Adrenal gland (tissue), 19 donors: ENCODE measurements at regions of chr12 and their contacts with region 1.

Region 1: DNA sequence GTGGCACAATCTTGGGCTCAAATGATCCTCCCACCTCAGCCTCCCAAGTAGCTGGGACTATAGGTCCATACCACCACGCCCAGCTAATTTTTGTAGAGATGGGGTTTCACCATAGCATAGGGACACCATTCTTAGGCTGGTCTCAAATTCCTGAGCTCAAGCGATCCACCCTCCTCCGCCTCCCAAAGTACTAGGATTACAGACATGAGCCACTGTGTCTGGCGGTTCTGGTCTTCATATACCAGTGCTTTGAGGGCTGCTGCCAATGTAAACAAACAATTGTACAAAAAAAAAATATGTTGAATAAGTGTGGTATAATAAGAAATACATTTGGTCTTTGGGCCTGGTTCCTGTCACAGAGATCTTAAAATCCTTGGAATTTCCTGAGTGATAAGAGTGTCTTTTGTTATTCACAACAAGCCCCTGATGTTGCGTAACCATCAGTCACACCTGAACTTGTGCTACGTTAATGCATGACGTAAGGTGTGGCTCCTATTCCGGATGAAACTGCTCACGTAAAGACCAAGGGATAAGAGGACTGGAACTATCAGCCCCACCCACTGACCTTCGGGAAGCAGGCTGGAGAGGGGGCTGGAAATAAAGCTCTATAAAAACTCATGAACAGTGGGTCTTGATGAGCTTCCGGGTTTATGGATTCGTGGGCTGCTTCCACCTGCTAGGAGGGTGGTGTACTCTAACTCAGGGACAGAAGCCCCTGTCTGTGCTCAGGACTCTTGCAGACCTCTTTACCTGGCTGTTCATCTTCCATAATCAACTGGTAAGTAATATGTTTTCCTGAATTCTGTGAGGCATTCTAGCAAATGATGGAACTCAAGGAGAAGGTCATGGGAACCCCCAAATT is 16.5 kb upstream of the RIMKLB start:
- DNase-seq: peak in 2 of 7 donors; percentile 13
- H3K4me3 ChIP-seq: no peak overlapping the region
- H3K27ac ChIP-seq: peak overlapping the region in 1 of 5 donors; percentile 57
- H3K4me1 ChIP-seq: no peaks in the 10 kb centered on the region
- H3K27me3 ChIP-seq: no peaks in the 10 kb centered on the region
- CTCF ChIP-seq: no peak
- POLR2A ChIP-seq: no peak

Region 2: DNA sequence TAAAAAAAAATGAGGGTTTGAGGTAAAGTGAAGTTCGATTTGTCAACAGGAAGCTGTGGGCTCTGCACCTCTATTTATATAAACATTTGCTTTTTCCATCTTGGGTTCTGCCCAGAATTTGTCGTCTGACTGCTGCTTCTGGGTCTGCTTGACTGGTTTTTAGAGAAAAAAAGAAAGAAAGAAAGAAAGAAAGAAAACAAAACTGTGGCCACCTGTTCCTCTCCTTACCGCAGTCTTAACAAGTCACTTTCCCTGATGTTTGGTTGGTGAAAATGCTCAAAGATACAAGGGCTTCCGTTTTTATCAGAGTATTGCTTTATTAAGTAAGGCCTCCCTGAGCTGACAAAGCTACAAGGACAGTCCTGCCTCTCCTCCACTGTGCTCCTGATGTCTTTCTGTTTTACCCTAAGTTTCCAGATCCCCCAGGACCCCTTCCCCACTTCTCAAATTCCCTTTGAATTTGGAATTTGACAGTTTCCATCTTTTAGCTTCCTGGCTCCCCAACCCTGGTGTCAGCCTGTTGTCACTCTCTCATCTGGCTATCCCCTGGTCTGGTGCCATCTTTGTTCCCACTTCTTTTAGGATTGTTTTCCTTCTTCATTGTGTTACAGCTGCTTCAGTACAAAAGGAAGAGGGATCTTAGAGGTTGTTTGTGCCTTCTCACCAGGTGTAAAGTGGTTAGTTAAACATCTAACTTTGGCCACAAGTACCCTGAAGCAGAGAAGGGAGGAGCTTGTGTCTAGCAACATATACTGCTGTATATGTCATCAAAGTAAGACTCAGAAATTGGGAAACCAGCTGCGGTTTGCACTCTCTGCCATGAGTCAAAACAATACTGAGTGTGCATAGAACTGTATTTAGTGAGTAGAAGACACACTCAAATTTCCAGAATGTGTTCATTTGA is 36.7 kb before region 1 on chr12:
- intact Hi-C with region 1: no loop called
- DNase-seq: no peak
- H3K4me3 ChIP-seq: no peak overlapping the region
- H3K27ac ChIP-seq: no peak overlapping the region
- H3K4me1 ChIP-seq: no peaks in the 10 kb centered on the region
- H3K27me3 ChIP-seq: peaks cover 5% of the 10 kb centered on the region
- CTCF ChIP-seq: no peak
- POLR2A ChIP-seq: no peak

Region 3: GRCh38 chr12:8828540-8829518 is 147.6 kb after region 1 on chr12:
- intact Hi-C with region 1: loop called in 1 of 2 experiments (anchors 5 kb)
- DNase-seq: no peak
- H3K4me3 ChIP-seq: no peak overlapping the region
- H3K27ac ChIP-seq: no peak overlapping the region
- H3K4me1 ChIP-seq: no peaks in the 10 kb centered on the region
- H3K27me3 ChIP-seq: no peaks in the 10 kb centered on the region
- CTCF ChIP-seq: no peak
- POLR2A ChIP-seq: no peak

Region 4: GRCh38 chr12:8860165-8860961 is 179.1 kb after region 1 on chr12:
- intact Hi-C with region 1: no loop called
- DNase-seq: peak; percentile 34 to 70 (median 50)
- H3K4me3 ChIP-seq: no peak overlapping the region
- H3K27ac ChIP-seq: no peak overlapping the region
- H3K4me1 ChIP-seq: no peaks in the 10 kb centered on the region
- H3K27me3 ChIP-seq: no peaks in the 10 kb centered on the region
- CTCF ChIP-seq: peak; percentile 38 to 70 (median 60)
- POLR2A ChIP-seq: no peak

Region 5: GRCh38 chr12:8890313-8891085 is 209.2 kb after region 1 on chr12:
- intact Hi-C with region 1: loop called in 1 of 2 experiments (anchors 5 kb)
- DNase-seq: peak; percentile 18 to 68 (median 54)
- H3K4me3 ChIP-seq: peak overlapping the region in 3 of 4 donors; percentile 12 to 70 (median 49)
- H3K27ac ChIP-seq: no peak overlapping the region
- H3K4me1 ChIP-seq: no peaks in the 10 kb centered on the region
- H3K27me3 ChIP-seq: no peaks in the 10 kb centered on the region
- CTCF ChIP-seq: peak; percentile 71 to 94 (median 78)
- POLR2A ChIP-seq: no peak